Panc1 (cell line): ENCODE measurements at regions of chr3 and their contacts with region 1.

Region 1: GRCh38 chr3:113136071-113136470 is 75.3 kb upstream of the BOC start:
- DNase-seq: peak; percentile 8
- ATAC-seq: peak; percentile 63; the same call in 1 of the 2 replicates
- H3K4me3 ChIP-seq: no peak overlapping the region
- H3K27ac ChIP-seq: no peak overlapping the region
- H3K4me1 ChIP-seq: no peaks in the 10 kb centered on the region
- H3K27me3 ChIP-seq: no peaks in the 10 kb centered on the region
- CTCF ChIP-seq: peak; percentile 72

Region 2: GRCh38 chr3:112829031-112829430 is 307.0 kb before region 1 on chr3:
- CTCF ChIA-PET with region 1: no interaction called
- POLR2A ChIA-PET with region 1: no interaction called
- in situ Hi-C with region 1: no loop called
- intact Hi-C with region 1: no loop called
- DNase-seq: no peak
- ATAC-seq: no peak
- H3K4me3 ChIP-seq: no peak overlapping the region
- H3K27ac ChIP-seq: no peak overlapping the region
- H3K4me1 ChIP-seq: no peaks in the 10 kb centered on the region
- H3K27me3 ChIP-seq: no peaks in the 10 kb centered on the region
- CTCF ChIP-seq: no peak

Region 3: DNA sequence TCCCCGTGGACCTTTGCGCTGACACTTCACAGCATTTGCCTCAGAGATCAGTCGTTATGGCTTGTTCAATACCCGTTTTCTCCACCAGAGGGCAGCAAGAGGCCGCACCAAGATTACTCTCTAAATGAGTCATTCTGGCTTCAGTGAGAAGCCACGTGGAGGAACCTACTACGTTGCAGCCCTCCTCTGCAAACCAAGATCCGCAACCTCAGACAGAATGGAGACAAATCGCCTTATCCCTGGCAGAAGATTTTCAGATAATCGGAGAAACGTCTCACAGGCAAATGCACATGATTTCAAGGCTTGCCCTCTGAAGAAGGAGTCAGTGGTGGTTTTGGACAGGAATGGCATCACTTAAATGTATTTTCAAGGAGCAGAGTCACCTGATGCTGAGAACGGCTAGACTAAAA is 84.8 kb before region 1 on chr3:
- CTCF ChIA-PET with region 1: no interaction called
- POLR2A ChIA-PET with region 1: no interaction called
- in situ Hi-C with region 1: no loop called
- intact Hi-C with region 1: loop called (anchors 10 kb)
- DNase-seq: peak; percentile 69
- ATAC-seq: peak; percentile 97
- H3K4me3 ChIP-seq: no peak overlapping the region
- H3K27ac ChIP-seq: no peak overlapping the region
- H3K4me1 ChIP-seq: no peaks in the 10 kb centered on the region
- H3K27me3 ChIP-seq: peaks cover 5% of the 10 kb centered on the region
- CTCF ChIP-seq: peak; percentile 96